PC-9 (cell line): ENCODE measurements at regions of chr22 and their contacts with region 1.

Region 1: GRCh38 chr22:29710922-29711593 is 8.7 kb upstream of the CABP7 start:
- DNase-seq: peak in 1 of 2 experiments; percentile 80
- H3K4me3 ChIP-seq: no peak overlapping the region
- H3K27ac ChIP-seq: no peak overlapping the region
- H3K4me1 ChIP-seq: 0 out of 2 replicates have a peak, but pooled peaks cover 11% of the 10 kb centered on the region
- H3K27me3 ChIP-seq: no peaks in the 10 kb centered on the region
- CTCF ChIP-seq: no peak

Region 2: GRCh38 chr22:28750471-28750881 is 960.6 kb before region 1 on chr22:
- CTCF ChIA-PET with region 1: no interaction called
- POLR2A ChIA-PET with region 1: interaction called, 12 read pairs
- intact Hi-C with region 1: no loop called
- DNase-seq: no peak
- H3K4me3 ChIP-seq: no peak overlapping the region
- H3K27ac ChIP-seq: no peak overlapping the region
- H3K4me1 ChIP-seq: no peaks in the 10 kb centered on the region
- H3K27me3 ChIP-seq: no peaks in the 10 kb centered on the region
- CTCF ChIP-seq: no peak

Region 3: DNA sequence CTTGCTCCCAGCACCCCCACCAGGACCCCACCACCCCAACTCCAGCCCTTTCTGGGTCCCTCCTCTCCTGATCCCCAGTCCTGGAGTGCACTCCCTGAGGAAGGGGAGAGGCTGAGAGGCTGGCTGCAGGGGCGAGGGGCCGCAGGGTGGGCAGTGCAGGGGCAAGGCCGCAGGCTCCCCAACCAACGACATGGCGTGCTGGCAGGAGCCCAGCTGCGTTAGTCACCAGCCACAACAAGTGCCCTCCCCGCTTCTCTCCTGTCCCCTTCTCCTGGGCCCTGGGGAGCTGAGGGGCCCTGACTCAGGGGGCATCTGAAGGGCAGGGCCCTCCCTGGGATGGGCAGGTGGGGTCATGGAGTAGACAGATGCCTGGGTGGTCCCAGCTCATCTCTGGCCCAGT is 11.1 kb after region 1 on chr22:
- CTCF ChIA-PET with region 1: no interaction called
- POLR2A ChIA-PET with region 1: no interaction called
- intact Hi-C with region 1: no loop called
- DNase-seq: peak in 1 of 2 experiments; percentile 46
- H3K4me3 ChIP-seq: no peak overlapping the region
- H3K27ac ChIP-seq: no peak overlapping the region
- H3K4me1 ChIP-seq: no peaks in the 10 kb centered on the region
- H3K27me3 ChIP-seq: peaks cover 20% of the 10 kb centered on the region
- CTCF ChIP-seq: no peak

Region 4: GRCh38 chr22:30038219-30038618 is 327.2 kb after region 1 on chr22:
- CTCF ChIA-PET with region 1: interaction called, 11 read pairs
- POLR2A ChIA-PET with region 1: no interaction called
- intact Hi-C with region 1: no loop called
- DNase-seq: peak; percentile 58 to 65
- H3K4me3 ChIP-seq: no peak overlapping the region
- H3K27ac ChIP-seq: no peak overlapping the region
- H3K4me1 ChIP-seq: peaks cover 31% of the 10 kb centered on the region
- H3K27me3 ChIP-seq: no peaks in the 10 kb centered on the region
- CTCF ChIP-seq: no peak